SK-N-SH (cell line): ENCODE measurements at regions of chr5 and their contacts with region 1.

Region 1: DNA sequence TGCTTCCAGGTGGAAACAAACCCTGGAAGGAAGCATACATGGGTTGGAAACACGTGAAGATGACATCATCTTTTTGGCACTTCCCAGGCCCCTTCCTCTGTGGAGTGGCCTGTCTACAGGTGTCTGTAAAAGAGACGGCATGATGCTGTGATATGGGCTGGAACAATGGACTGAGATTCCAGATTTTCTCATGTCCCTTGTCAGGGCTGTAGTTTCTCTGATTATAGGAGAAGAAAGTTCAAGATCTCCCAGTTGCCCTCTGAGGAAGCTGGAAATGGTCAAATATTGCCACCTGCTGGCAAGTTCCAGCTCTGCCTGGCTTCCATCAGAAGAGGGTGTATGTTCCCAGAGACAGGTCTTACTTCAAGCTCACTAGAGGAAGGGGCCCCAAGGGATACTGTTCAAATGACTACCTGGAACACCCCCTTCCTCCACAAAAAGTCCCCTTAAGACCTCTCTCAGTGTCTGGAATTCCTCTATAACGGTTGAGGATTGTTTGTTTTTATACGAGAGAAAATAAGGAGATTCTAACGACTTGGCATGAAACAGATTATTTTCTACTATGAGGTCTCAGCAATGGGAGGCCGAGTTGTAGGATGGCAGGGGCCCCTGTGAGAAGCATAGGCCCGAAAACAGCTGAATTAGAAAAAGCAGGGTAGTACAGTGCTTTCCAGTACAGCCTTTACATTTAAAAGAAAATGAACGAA is 7.3 kb upstream of the ANXA6 start:
- DNase-seq: peak; percentile 76
- H3K4me3 ChIP-seq: peak overlapping the region in 1 of 2 experiments; percentile 34; a peak in 1 of 4 replicates
- H3K27ac ChIP-seq: no peak overlapping the region
- H3K4me1 ChIP-seq: no peaks in the 10 kb centered on the region
- H3K27me3 ChIP-seq: no peaks in the 10 kb centered on the region; the same call in 1 of the 2 replicates
- CTCF ChIP-seq: peak; percentile 93
- EP300 ChIP-seq: no peak
- RAD21 ChIP-seq: peak; percentile 97

Region 2: DNA sequence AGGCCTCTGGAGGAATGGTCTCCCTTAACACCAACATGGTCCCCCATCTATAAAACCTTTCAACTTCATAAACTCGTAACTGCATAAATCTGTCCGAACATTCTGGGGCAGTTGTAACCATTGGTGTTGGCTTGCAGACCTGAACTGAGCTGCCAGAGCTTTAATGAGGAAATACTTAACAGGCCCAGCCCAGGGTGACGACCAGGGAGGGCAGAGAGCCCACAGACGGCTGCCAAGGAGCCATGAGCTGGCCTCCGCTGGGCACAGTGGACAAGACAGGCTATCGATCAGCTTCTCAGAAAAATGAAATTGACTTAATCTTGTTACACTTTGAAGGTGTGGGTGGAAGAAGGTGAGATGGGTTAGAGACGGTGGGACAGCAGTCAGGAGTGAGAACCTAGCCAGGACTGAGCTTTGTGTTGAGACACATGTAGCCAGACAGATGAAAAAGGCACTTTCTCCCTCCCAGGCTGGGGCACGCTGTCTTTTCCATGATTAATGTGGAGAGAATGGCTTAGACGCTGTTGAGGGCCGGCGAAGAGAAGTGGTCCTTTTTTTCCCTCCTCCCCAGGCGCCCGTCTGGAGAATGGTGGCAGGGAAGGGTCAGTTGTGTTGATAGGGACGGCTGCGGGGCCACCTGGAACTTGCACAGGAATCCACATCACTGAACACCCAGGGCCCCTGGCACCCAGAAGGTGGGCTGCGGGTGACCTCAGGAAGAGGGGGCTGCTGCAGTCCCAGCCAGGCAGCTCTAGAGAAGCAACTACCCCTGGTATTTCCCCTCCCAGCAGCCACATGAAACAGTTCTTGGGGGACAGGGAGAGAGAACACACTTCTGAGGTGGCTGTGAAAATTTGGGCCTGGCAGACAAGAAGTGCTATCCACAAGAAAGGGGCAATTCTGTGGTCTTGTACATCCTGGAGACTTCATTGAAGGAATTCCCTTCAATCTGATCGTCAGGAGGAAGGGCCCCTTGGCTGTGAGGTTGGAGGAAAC is 834.7 kb before region 1 on chr5:
- CTCF ChIA-PET with region 1: no interaction called
- POLR2A ChIA-PET with region 1: no interaction called
- DNase-seq: no peak
- H3K4me3 ChIP-seq: no peak overlapping the region
- H3K27ac ChIP-seq: no peak overlapping the region
- H3K4me1 ChIP-seq: peaks cover 0 to 4% of the 10 kb centered on the region in 2 experiments; a peak in 1 of 4 replicates
- H3K27me3 ChIP-seq: no peaks in the 10 kb centered on the region
- CTCF ChIP-seq: no peak
- EP300 ChIP-seq: no peak
- RAD21 ChIP-seq: no peak

Region 3: GRCh38 chr5:151002250-151002649 is 162.6 kb before region 1 on chr5:
- CTCF ChIA-PET with region 1: interaction called, 12 read pairs
- POLR2A ChIA-PET with region 1: no interaction called
- DNase-seq: peak; percentile 41
- H3K4me3 ChIP-seq: no peak overlapping the region
- H3K27ac ChIP-seq: no peak overlapping the region
- H3K4me1 ChIP-seq: no peaks in the 10 kb centered on the region; a peak in 1 of 4 replicates
- H3K27me3 ChIP-seq: no peaks in the 10 kb centered on the region
- CTCF ChIP-seq: peak; percentile 60
- EP300 ChIP-seq: no peak
- RAD21 ChIP-seq: peak; percentile 76

Region 4: DNA sequence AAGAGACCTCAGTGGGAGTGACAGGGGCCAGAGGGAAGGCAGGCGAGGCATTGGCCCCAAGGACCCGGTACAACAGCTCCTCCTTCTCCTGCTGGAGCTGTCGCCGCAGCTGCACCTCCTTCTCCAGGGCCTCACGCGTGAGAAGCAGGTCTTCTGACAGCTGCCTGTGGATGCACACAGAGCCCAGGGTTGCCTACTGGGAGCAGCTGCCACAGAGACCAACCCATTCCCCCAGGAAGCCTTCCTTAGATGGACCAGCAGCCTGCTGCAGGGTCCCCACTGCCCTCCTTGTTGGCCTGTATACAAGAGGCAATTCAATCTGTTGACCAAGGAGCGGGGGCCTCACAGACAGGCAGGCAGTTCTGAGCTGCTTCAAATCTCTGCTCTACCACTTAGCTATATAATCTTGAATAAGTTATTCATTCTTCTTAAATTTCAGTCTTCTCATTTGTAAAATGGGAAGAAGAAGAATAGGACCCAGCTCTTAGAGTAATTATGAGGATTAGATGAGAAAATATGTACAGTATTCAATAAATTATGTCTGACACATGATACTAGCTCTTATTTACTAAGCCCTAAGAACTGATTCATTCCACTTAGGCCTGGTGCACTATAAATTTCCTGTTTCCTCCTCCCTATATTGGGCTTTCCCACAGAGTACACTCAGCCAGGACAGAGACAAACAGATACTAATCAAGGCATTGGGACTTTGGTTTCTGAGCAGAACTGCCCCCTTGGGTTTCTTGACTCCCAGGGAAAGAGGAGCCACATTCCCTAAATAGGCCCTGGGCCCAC is 18.8 kb after region 1 on chr5:
- CTCF ChIA-PET with region 1: interaction called, 31 read pairs
- POLR2A ChIA-PET with region 1: no interaction called
- DNase-seq: no peak
- H3K4me3 ChIP-seq: no peak overlapping the region
- H3K27ac ChIP-seq: no peak overlapping the region
- H3K4me1 ChIP-seq: no peaks in the 10 kb centered on the region; a peak in 1 of 4 replicates
- H3K27me3 ChIP-seq: no peaks in the 10 kb centered on the region
- CTCF ChIP-seq: no peak
- EP300 ChIP-seq: no peak
- RAD21 ChIP-seq: no peak

Region 5: DNA sequence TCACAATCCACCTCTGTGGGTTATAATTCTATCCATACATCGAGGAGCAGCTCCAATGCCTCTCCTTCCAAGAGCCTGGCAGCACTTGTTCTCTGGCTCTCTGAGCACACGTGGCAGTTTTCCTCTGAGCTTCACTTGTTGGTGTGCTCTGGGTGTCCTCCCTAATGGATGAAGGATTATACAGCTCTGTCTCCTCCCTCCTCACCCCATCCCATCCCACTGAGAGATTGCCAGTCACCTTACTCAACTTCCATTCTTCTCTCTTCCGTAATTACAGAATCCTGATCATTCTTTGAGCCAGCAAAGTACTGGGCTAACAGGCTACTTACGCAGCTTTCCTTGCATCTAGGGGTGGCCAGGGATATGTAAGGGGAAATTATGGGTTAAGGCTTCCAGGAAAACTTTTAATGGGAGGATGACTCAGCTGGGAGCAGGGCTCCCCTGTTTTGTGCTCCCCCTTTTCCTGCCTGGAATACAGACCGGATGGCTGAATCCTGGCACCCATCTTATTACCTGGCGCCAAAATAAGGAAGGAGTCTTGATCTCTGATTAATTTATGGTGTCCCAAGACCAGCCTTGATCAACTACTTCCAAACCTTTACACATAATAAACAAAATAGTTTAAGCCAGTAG is 65.3 kb after region 1 on chr5:
- CTCF ChIA-PET with region 1: interaction called, 13 read pairs
- POLR2A ChIA-PET with region 1: no interaction called
- DNase-seq: no peak
- H3K4me3 ChIP-seq: no peak overlapping the region
- H3K27ac ChIP-seq: no peak overlapping the region
- H3K4me1 ChIP-seq: no peaks in the 10 kb centered on the region
- H3K27me3 ChIP-seq: no peaks in the 10 kb centered on the region; the same call in 1 of the 2 replicates
- CTCF ChIP-seq: no peak
- EP300 ChIP-seq: no peak
- RAD21 ChIP-seq: no peak

Region 6: GRCh38 chr5:151239237-151239861 is 74.5 kb after region 1 on chr5:
- CTCF ChIA-PET with region 1: interaction called, 16 read pairs
- POLR2A ChIA-PET with region 1: no interaction called
- DNase-seq: peak; percentile 85
- H3K4me3 ChIP-seq: peak overlapping the region in 1 of 2 experiments; percentile 11; a peak in 1 of 4 replicates
- H3K27ac ChIP-seq: no peak overlapping the region
- H3K4me1 ChIP-seq: no peaks in the 10 kb centered on the region
- H3K27me3 ChIP-seq: no peaks in the 10 kb centered on the region
- CTCF ChIP-seq: peak; percentile 77
- EP300 ChIP-seq: no peak
- RAD21 ChIP-seq: peak; percentile 76